MCF 10A (cell line): ENCODE measurements at regions of chr5 and their contacts with region 1.

Region 1: GRCh38 chr5:177497292-177498033 is at the start of gene PDLIM7:
- DNase-seq: peak; percentile 99
- H3K4me3 Mint-ChIP-seq: peak within 1 kb of the TSS; percentile 74
- H3K27ac Mint-ChIP-seq: peak within 1 kb of the TSS; percentile 55
- H3K4me1 Mint-ChIP-seq: peaks cover 58% of the 10 kb centered on the region
- H3K27me3 Mint-ChIP-seq: no peaks in the 10 kb centered on the region
- CTCF ChIP-seq: no peak
- total RNA-seq, gene PDLIM7: 164 and 257 TPM in 2 replicates

Region 2: DNA sequence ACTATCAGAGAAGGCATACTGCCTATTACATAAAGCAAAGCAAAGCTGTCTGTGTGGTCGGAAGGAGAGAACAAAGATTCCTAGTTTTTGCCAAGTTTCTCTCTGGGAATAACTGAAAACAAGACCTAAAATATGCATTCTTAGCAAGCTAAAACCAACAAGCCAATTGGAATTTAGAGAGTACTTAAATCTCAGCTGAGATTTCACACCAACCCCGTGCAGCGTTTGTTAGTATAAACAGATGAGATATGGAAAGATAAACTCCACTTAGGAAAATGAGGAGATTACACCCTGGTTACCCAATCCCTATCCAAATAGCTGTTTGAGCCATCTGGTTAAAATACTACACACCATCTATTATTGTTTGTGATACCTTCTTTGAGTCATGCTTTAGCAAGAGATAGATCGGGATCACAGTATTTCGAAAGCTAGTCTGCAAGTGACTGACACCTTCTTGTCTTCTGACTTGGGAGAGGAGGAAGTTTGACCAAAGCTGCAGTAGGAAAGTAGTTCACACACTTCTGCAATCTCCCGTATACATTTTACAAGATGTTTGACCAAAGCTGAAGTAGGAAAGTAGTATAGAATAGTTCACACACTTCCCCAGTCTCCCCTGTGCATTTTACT is 1031.1 kb before region 1 on chr5:
- CTCF ChIA-PET with region 1: no interaction called
- POLR2A ChIA-PET with region 1: no interaction called
- intact Hi-C with region 1: no loop called
- DNase-seq: peak; percentile 84
- H3K4me3 Mint-ChIP-seq: peak overlapping the region; percentile 11
- H3K27ac Mint-ChIP-seq: peak overlapping the region; percentile 24
- H3K4me1 Mint-ChIP-seq: peaks cover 35% of the 10 kb centered on the region
- H3K27me3 Mint-ChIP-seq: no peaks in the 10 kb centered on the region
- CTCF ChIP-seq: no peak

Region 3: DNA sequence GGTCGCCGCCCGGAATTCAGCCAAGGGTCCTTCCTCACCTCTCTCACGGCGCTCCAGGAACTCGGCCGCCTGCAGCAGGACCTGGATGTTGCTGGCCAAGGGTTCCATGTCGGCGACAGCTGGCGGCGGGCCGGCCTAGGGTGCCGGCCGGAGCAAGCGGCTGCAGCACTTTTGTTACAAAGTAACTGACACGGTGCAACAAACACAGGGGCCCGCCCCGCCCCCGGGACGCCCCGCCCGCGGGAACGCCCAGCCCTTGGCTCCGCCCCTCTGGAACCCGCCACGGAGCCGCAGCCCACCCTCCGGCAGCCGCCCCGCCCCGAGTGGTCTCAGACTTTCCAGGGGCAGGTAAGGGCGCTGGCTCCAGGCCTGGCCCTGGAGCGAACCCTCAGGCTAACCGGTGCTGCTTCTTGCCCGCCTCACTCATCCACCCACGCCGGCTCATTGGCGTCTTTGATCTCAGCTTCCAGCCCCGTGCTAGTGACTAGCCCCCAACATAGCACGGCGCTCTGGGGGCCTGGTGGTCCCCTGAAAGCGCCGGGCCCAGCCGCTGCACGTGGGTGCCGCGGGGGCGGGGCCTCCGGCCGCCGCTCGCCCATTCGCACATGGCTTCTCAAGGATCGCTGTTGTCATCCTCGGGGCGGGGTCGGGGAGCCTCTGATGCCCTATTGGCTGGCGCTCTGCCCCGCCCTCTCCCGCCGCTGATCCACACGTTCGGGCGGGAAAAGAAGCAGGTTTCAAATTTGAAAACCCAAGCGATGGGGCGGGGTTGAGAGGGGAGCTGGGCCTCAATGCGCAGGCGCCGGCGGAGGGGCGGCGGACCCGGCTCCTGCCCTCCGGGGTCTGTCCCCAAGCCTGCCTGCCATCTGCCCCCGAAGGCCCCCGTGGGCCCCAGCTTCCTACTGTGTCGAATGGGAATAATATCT is 185.5 kb before region 1 on chr5 and contains the start of gene MXD3:
- CTCF ChIA-PET with region 1: interaction called, 39 read pairs
- POLR2A ChIA-PET with region 1: interaction called, 8 read pairs
- intact Hi-C with region 1: loop called (anchors 5 kb)
- DNase-seq: peak; percentile 99
- H3K4me3 Mint-ChIP-seq: peak within 1 kb of the TSS; percentile 66
- H3K27ac Mint-ChIP-seq: peak within 1 kb of the TSS; percentile 51
- H3K4me1 Mint-ChIP-seq: peaks cover 29% of the 10 kb centered on the region
- H3K27me3 Mint-ChIP-seq: no peaks in the 10 kb centered on the region
- CTCF ChIP-seq: no peak
- total RNA-seq, gene MXD3: 8.4 and 13.2 TPM in 2 replicates

Region 4: GRCh38 chr5:177412603-177413233 is 84.7 kb before region 1 on chr5:
- CTCF ChIA-PET with region 1: interaction called, 13 read pairs
- POLR2A ChIA-PET with region 1: interaction called, 4 read pairs
- intact Hi-C with region 1: no loop called
- DNase-seq: no peak
- H3K4me3 Mint-ChIP-seq: no peak overlapping the region
- H3K27ac Mint-ChIP-seq: no peak overlapping the region
- H3K4me1 Mint-ChIP-seq: no peaks in the 10 kb centered on the region
- H3K27me3 Mint-ChIP-seq: no peaks in the 10 kb centered on the region
- CTCF ChIP-seq: no peak

Region 5: DNA sequence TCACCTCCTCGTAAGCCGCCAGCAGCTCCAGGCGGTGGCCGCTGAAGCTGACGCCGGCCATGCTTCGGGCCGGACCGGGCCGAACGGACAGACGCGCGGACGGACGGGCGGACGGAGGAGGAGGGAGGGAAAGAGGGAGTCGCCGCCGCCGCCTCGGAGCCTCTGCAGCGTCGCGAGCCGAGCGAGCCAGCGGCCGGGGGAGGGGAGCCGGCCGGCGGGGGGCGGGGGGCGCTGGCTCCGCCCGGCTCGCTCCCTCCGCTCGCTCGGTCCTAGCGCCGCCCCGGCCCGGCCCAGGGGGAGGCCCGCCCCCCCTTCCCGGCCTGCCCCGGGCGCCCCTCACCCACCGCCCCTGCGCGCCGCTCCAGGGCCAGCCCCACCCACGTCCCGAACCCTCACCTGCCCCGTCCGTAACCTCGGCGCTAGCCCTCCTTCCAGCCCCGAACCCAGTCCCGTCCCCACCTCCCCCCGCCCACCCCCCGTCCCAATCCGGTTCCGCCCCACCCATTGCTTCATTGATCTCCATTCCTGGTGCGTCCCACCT is 23.9 kb before region 1 on chr5 and contains the start of gene DBN1:
- CTCF ChIA-PET with region 1: interaction called, 65 read pairs
- POLR2A ChIA-PET with region 1: interaction called, 18 read pairs
- intact Hi-C with region 1: loop called (anchors 2 kb)
- DNase-seq: peak; percentile 56
- H3K4me3 Mint-ChIP-seq: peak within 1 kb of the TSS; percentile 74
- H3K27ac Mint-ChIP-seq: no peak within 1 kb of the TSS
- H3K4me1 Mint-ChIP-seq: peaks cover 55% of the 10 kb centered on the region
- H3K27me3 Mint-ChIP-seq: no peaks in the 10 kb centered on the region
- CTCF ChIP-seq: no peak
- total RNA-seq, gene DBN1: 149 and 165 TPM in 2 replicates

Region 6: GRCh38 chr5:177509381-177509951 is 12.0 kb after region 1 on chr5 and contains the start of gene DOK3:
- CTCF ChIA-PET with region 1: interaction called, 51 read pairs
- POLR2A ChIA-PET with region 1: interaction called, 4 read pairs
- intact Hi-C with region 1: no loop called
- DNase-seq: no peak
- H3K4me3 Mint-ChIP-seq: no peak within 1 kb of the TSS
- H3K27ac Mint-ChIP-seq: no peak within 1 kb of the TSS
- H3K4me1 Mint-ChIP-seq: peaks cover 8% of the 10 kb centered on the region
- H3K27me3 Mint-ChIP-seq: no peaks in the 10 kb centered on the region
- CTCF ChIP-seq: no peak
- total RNA-seq, gene DOK3: 5.4 and 6.0 TPM in 2 replicates

Region 7: DNA sequence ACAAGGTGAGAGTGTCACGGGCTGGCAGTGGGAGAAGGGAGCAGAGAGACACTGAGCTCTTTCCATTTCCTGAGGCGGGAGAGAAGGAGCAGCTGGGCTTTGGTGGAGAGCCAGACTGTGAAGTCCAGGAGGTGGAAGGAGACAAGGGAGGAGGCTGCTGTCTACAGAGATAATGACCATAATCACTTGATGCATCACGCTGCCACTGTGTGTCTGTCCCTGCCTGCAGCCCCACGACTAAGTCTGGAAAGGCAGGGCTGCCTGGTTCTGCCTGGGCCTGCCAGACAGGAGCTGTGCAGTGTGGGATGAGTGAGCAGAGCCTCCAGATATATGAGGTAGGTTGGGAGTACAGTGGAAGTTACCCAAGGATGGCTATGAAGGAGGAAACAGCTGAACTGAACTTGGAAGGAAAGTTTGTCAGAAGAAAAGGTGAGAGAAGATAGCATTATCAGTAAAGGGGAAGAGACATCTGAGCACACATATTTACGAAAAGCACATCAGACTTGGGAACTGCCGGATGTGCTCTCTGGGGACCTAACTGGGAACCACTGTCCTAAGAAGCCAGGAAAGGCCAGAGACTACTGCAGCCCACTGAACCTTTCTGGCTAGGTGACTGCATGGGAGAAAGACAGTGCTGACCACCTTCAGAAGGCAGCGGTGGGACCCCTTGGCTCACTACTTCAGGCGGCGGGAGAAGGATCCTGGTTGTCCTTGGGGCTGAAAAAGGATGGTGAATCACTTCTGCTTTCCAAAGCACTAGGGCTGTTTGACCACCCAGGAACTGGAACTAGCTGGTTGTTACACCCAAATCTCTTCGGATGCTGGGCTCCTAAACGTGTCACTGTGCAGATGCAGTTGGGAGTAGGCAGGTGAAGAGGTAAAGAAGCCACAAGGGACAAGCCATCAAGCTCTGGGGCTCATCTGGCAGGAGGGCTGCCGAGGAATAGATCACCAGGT is 32.1 kb after region 1 on chr5:
- CTCF ChIA-PET with region 1: interaction called, 10 read pairs
- POLR2A ChIA-PET with region 1: interaction called, 3 read pairs
- intact Hi-C with region 1: no loop called
- DNase-seq: no peak
- H3K4me3 Mint-ChIP-seq: no peak overlapping the region
- H3K27ac Mint-ChIP-seq: no peak overlapping the region
- H3K4me1 Mint-ChIP-seq: no peaks in the 10 kb centered on the region
- H3K27me3 Mint-ChIP-seq: no peaks in the 10 kb centered on the region
- CTCF ChIP-seq: no peak

Region 8: GRCh38 chr5:177592010-177592834 is 94.8 kb after region 1 on chr5 and contains the start of gene TMED9:
- CTCF ChIA-PET with region 1: interaction called, 4 read pairs
- POLR2A ChIA-PET with region 1: no interaction called
- intact Hi-C with region 1: loop called (anchors 5 kb)
- DNase-seq: peak; percentile 86
- H3K4me3 Mint-ChIP-seq: peak within 1 kb of the TSS; percentile 85
- H3K27ac Mint-ChIP-seq: peak within 1 kb of the TSS; percentile 96
- H3K4me1 Mint-ChIP-seq: peaks cover 7% of the 10 kb centered on the region
- H3K27me3 Mint-ChIP-seq: peaks cover 36% of the 10 kb centered on the region
- CTCF ChIP-seq: no peak
- total RNA-seq, gene TMED9: 301 and 365 TPM in 2 replicates